ENCODE measurements at regions of chrX and their contacts with region 1.

Region 1: GRCh38 chrX:46698691-46699090 is 60.2 kb downstream of the SLC9A7 start:
- DNase-seq: no peak
- CTCF ChIP-seq: no peak

Region 2: GRCh38 chrX:46686003-46686645 is 12.6 kb before region 1 on chrX:
- CTCF ChIA-PET with region 1: interaction called, 18 read pairs
- POLR2A ChIA-PET with region 1: no interaction called
- DNase-seq: peak; percentile 20
- CTCF ChIP-seq: peak; percentile 41

Measured in GM10248 (cell line).